ENCODE measurements at regions of chr11 and their contacts with region 1.

Region 1: DNA sequence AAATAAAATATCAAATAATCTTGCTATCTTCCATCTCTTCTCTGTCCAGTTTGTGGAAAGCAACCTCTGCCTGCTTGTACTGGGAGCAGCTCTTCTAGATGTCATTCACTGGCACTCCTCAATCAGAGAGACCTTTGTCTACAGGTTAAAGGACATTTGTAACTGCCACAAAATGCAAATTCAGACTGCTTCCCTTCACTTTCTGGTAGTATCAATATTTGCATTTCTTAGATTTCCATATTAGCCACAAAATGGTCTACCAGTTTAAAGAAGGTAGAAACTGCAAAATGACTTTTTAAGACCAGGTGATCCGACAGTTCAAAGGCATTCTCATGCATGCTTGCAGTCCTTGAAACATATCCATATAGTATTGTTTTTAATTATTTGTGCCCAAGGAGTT is 51.7 kb upstream of the RCN1 start:
- DNase-seq: no peak
- H3K4me3 ChIP-seq: no peak overlapping the region
- H3K4me3 Mint-ChIP-seq: no peak overlapping the region
- H3K27ac ChIP-seq: no peak overlapping the region
- H3K27ac Mint-ChIP-seq: no peak overlapping the region
- H3K4me1 ChIP-seq: no peaks in the 10 kb centered on the region
- H3K4me1 Mint-ChIP-seq: no peaks in the 10 kb centered on the region
- H3K27me3 ChIP-seq: no peaks in the 10 kb centered on the region
- H3K27me3 Mint-ChIP-seq: peaks cover 18 to 22% of the 10 kb centered on the region in 2 donors

Region 2: DNA sequence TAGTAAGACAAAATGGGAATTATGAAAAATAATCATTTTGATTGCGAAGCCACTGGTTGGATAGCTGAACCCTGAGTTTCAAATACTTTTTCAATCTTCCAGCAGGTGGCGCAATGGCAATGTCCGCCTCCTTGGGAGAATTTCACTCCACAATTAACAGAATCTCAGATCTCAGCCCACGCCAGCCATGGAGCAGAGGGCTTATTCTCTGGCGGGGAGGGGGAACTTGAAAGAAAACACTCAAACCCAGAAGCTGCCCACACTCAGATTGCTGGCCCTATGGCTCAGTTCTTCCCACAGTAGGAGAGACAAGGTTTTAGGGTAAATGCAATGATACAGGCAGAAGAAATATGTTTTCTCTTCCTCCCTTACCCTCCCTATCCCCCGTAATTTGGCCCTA is 13.1 kb after region 1 on chr11:
- CTCF ChIA-PET with region 1: interaction called, 22 read pairs
- POLR2A ChIA-PET with region 1: no interaction called
- intact Hi-C with region 1: no loop called
- DNase-seq: peak; percentile 25 to 48 (median 41)
- H3K4me3 ChIP-seq: no peak overlapping the region
- H3K4me3 Mint-ChIP-seq: no peak overlapping the region
- H3K27ac ChIP-seq: no peak overlapping the region
- H3K27ac Mint-ChIP-seq: no peak overlapping the region
- H3K4me1 ChIP-seq: no peaks in the 10 kb centered on the region
- H3K4me1 Mint-ChIP-seq: no peaks in the 10 kb centered on the region
- H3K27me3 ChIP-seq: no peaks in the 10 kb centered on the region
- H3K27me3 Mint-ChIP-seq: peaks cover 17 to 26% of the 10 kb centered on the region in 2 donors